Endothelial cell of umbilical vein (primary cell): ENCODE measurements at regions of chr10 and their contacts with region 1.

Region 1: DNA sequence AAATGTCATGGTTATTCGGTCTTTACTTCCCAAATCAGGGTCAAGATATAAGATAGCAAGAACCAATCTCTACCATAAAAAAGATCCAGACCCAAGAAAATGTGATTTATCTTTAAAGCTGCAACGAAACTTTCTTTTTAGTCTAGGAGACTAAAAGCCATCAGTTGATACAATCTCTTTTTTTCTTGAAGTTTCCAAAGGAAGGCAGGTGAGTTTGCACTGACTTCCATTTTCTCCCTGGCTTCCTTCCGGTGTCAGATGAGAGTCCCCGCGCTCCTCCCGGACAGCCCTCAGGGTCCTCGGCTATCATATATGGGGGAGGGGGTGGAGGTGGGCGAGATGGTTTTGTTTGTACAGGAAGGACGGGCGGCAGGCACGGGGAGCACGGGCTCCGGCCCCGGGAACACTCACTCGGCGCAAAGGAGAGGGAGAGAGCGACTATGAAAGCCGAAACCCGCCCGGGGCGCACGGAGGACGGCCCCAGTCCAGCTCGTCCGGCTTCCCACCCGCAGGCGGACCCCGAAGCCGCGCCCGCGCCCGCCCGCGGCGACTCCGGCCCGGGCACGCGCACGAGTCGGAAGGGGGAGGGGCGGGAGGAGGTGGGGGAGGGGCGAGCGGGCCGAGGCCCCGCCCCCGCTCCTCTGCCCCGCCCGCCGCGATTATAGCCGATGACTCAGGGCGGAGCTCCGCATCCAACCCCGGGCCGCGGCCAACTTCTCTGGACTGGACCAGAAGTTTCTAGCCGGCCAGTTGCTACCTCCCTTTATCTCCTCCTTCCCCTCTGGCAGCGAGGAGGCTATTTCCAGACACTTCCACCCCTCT is at the start of gene BAG3:
- DNase-seq: peak; percentile 84
- H3K4me3 ChIP-seq: peak within 1 kb of the TSS; percentile 86 to 97 (median 93)
- H3K27ac ChIP-seq: peak within 1 kb of the TSS; percentile 56
- H3K4me1 ChIP-seq: peaks cover 34% of the 10 kb centered on the region
- H3K27me3 ChIP-seq: no peaks in the 10 kb centered on the region
- CTCF ChIP-seq: no peak
- POLR2A ChIP-seq: peak; percentile 99
- total RNA-seq, gene BAG3: 65.4 and 66.7 TPM in 2 replicates

Region 2: DNA sequence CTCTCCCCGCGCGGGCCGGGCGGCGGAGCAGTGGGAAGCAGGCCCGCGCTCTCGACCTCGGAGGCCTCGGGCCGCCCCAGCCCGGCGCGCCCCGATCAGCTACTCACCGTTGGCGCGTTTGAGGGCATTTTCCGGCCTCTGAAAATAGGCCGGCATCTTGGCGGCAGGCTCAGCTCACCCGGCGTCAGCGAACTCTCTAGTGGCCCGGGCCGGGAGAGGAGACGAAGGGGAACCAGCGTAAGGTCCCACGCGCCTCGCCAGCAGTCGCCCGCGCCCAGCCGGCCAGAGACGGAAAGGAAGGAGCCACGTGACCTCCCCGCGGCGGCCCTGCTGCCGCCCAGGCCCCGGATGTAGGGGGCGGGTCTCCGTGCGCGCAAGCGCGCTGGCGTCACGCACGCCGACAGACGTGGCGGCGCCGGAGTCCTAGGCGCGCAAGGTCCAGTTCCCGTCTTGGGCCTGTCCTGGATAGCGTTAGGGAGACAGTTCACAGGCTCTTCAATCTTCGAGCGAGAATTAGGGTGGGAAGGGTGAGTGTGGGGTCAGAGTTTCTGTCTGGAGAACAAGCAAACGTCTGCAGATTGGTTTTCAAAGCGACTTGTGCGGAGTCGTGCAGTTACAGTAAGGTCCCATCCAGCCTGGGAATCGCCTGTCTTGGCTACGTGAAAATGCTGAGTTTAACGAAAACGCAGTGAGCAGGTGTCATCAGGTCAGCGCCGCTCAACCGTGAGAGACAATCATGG is 570.2 kb before region 1 on chr10 and contains the start of gene EIF3A:
- CTCF ChIA-PET with region 1: no interaction called
- POLR2A ChIA-PET with region 1: no interaction called
- dilution Hi-C with region 1: no loop called
- intact Hi-C with region 1: loop called (anchors 1 kb)
- DNase-seq: peak; percentile 95
- H3K4me3 ChIP-seq: peak within 1 kb of the TSS; percentile 80 to 97 (median 97)
- H3K27ac ChIP-seq: peak within 1 kb of the TSS; percentile 94
- H3K4me1 ChIP-seq: peaks cover 19% of the 10 kb centered on the region
- H3K27me3 ChIP-seq: no peaks in the 10 kb centered on the region
- CTCF ChIP-seq: no peak
- POLR2A ChIP-seq: peak; percentile 98
- total RNA-seq, gene EIF3A: 149 and 159 TPM in 2 replicates

Region 3: GRCh38 chr10:119333146-119333792 is 317.6 kb before region 1 on chr10:
- CTCF ChIA-PET with region 1: no interaction called
- POLR2A ChIA-PET with region 1: no interaction called
- dilution Hi-C with region 1: no loop called
- intact Hi-C with region 1: no loop called
- DNase-seq: peak; percentile 20
- H3K4me3 ChIP-seq: no peak overlapping the region
- H3K27ac ChIP-seq: no peak overlapping the region
- H3K4me1 ChIP-seq: peaks cover 24% of the 10 kb centered on the region
- H3K27me3 ChIP-seq: no peaks in the 10 kb centered on the region
- CTCF ChIP-seq: no peak
- POLR2A ChIP-seq: no peak

Region 4: GRCh38 chr10:119596537-119597404 is 54.1 kb before region 1 on chr10 and contains the start of gene TIAL1:
- CTCF ChIA-PET with region 1: interaction called, 3 read pairs
- POLR2A ChIA-PET with region 1: interaction called, 6 read pairs
- dilution Hi-C with region 1: no loop called
- intact Hi-C with region 1: loop called (anchors 1 kb)
- DNase-seq: peak; percentile 100
- H3K4me3 ChIP-seq: peak within 1 kb of the TSS; percentile 85 to 97 (median 97)
- H3K27ac ChIP-seq: peak within 1 kb of the TSS; percentile 95
- H3K4me1 ChIP-seq: peaks cover 41% of the 10 kb centered on the region
- H3K27me3 ChIP-seq: no peaks in the 10 kb centered on the region
- CTCF ChIP-seq: no peak
- POLR2A ChIP-seq: peak; percentile 96
- total RNA-seq, gene TIAL1: 150 and 154 TPM in 2 replicates

Region 5: DNA sequence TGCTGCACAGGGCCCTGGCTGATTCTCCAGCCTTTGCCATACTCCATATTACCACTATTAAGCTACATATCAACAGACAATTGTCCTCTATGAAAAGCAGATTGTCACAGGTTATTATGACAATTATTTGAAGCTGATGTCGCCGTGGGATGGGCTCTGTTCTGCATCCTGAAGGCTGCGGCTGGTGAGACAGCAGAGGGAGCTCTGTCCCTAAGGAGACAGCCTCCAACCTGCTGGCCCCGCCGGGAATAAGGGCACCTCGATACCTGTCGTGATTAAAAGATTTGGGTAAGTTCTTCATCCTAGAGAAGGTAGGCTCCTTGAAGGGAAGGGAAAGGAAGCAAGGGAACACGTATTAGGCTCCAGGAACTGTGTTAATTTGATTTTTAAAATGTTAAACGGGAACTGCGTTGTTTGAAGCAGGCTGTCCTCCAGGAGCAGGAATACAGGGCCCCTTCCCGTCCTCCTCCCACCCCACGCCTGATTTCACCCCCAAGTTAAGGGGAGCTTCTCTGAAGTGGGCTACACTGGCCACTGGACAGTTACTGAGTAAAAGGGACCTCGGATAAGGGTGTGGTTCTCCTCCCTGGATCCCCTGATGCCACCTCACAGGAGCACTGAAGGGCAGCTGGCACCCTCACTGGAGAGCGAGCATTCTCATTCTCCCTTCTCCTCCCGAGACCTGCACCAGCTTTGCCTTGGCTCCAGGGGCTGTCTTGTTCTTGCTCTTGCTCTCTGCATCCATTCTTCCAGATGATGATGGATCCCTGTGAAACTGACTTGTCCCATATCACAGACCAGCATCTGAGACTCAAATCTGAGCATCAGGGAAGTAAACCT is 42.4 kb before region 1 on chr10:
- CTCF ChIA-PET with region 1: interaction called, 21 read pairs
- POLR2A ChIA-PET with region 1: interaction called, 3 read pairs
- dilution Hi-C with region 1: no loop called
- intact Hi-C with region 1: loop called (anchors 1 kb)
- DNase-seq: peak; percentile 42
- H3K4me3 ChIP-seq: no peak overlapping the region
- H3K27ac ChIP-seq: no peak overlapping the region
- H3K4me1 ChIP-seq: no peaks in the 10 kb centered on the region
- H3K27me3 ChIP-seq: no peaks in the 10 kb centered on the region
- CTCF ChIP-seq: peak; percentile 66 to 68
- POLR2A ChIP-seq: no peak

Region 6: DNA sequence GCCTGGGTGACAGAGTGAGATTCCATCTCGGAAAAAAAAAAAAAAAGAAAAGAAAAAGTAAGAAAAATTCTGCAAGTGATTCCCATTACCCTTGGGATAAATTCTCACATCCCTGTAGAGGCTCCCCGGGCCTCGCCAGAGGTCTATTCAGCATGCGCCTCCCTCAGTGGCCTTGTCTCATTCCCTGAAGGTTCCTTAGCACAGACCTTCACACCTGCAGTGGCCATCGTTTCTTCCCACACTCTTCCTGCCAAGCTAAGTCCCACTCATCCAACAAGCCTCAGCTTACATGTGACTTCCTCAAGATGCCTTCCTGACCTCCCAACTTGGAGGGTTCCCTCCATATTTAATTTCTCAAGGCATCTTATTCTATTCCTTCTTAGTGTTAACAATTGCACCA is 20.6 kb before region 1 on chr10:
- CTCF ChIA-PET with region 1: no interaction called
- POLR2A ChIA-PET with region 1: no interaction called
- dilution Hi-C with region 1: no loop called
- intact Hi-C with region 1: no loop called
- DNase-seq: no peak
- H3K4me3 ChIP-seq: no peak overlapping the region
- H3K27ac ChIP-seq: no peak overlapping the region
- H3K4me1 ChIP-seq: no peaks in the 10 kb centered on the region
- H3K27me3 ChIP-seq: peaks cover 0 to 1% of the 10 kb centered on the region in 2 experiments
- CTCF ChIP-seq: no peak
- POLR2A ChIP-seq: no peak

Region 7: DNA sequence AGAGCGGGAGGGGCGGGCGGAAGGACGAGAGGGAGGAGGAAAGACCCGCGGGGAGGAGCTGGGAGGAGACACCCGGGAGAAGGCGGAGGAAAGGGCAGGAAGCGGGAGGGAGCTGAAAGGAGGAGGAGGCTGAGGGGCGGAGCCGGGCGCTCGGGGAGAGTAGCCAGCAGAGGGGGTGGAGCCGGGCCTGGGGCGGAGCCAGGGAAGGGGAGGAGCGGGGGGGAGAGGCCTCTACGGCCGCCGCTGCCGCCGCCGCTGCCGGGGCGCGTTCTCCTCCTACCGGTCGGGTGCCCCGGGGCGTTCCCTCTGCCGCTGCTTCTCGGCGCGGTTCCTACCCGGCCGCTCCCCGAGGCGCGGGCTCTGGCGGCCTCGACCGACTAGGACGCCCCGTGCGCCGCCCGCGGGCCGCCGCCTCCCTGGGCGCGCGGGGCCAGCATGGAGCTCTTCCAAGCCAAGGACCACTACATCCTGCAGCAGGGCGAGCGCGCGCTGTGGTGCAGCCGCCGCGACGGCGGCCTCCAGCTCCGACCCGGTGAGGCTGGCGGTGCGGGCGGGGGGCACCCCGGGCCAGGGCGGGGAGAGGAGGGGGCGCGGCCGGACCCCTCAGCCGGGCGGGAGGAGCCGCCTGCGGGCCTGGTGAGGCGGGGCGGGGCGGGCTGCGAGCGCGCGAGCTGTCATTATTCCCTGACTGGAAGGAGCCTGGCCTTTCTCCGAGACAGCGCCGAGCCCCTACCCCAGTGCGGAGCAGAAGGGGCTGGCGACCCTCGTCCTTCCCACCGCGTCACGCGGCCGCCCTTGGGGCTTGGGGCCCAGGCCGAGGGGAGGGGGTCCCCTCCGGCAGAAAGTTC is 75.1 kb after region 1 on chr10 and contains the start of gene INPP5F:
- CTCF ChIA-PET with region 1: interaction called, 4 read pairs
- POLR2A ChIA-PET with region 1: interaction called, 7 read pairs
- dilution Hi-C with region 1: no loop called
- intact Hi-C with region 1: loop called (anchors 1 kb)
- DNase-seq: peak; percentile 97
- H3K4me3 ChIP-seq: peak within 1 kb of the TSS; percentile 56 to 81 (median 74)
- H3K27ac ChIP-seq: peak within 1 kb of the TSS; percentile 80
- H3K4me1 ChIP-seq: peaks cover 20% of the 10 kb centered on the region
- H3K27me3 ChIP-seq: no peaks in the 10 kb centered on the region
- CTCF ChIP-seq: no peak
- POLR2A ChIP-seq: peak; percentile 68
- total RNA-seq, gene INPP5F: 20.3 and 26.6 TPM in 2 replicates